Breast epithelium (tissue), 4 donors: ENCODE measurements at regions of chr13 and their contacts with region 1.

Region 1: DNA sequence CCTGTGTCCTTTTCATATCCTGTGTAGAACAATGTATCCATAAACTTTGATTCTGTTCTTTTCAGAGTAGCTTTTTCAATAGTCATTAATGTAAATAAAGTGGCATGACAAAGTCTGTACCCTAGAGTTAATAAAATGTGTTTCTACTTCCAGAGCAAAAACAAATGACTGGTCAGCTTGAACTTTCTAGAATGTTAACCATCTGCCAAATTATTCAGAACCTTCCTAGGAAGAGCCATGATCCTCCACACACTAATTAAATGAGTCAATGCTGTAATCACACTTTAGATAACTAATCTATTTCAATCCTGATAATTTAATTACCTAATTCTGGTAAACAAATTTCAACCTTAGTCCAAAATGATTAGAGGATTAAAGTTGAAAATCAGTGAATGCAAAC is 73.2 kb downstream of the DIAPH3 start:
- DNase-seq: no peak
- H3K4me3 ChIP-seq: no peak overlapping the region
- H3K27ac ChIP-seq: no peak overlapping the region
- H3K4me1 ChIP-seq: no peaks in the 10 kb centered on the region
- H3K27me3 ChIP-seq: no peaks in the 10 kb centered on the region
- CTCF ChIP-seq: no peak
- POLR2A ChIP-seq: no peak

Region 2: DNA sequence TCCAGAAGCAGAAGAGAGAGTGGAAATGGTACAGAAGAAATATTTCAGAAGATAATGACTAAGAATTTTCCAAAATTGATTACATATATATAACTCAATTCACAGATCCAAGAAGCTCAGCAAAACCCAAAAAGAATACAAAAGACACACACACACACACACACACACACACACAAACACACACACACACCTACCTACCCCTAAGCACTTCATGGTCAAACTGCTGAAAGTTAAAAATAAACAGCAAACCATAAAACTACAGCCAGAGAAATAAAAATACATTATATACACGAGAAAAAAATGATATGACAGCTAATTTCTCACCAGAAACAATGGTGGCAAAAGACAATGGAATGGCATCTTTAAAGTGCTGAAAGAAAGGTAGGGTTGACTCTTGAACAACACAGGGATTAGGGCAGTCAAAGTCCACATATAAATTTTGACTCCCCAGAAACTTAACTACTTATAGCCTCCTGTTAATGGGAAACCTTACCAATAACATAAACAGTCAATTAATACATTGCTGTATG is 24.0 kb after region 1 on chr13:
- intact Hi-C with region 1: loop called (anchors 2 kb)
- DNase-seq: no peak
- H3K4me3 ChIP-seq: no peak overlapping the region
- H3K27ac ChIP-seq: no peak overlapping the region
- H3K4me1 ChIP-seq: no peaks in the 10 kb centered on the region
- H3K27me3 ChIP-seq: no peaks in the 10 kb centered on the region
- CTCF ChIP-seq: no peak
- POLR2A ChIP-seq: no peak